OCI-LY7 (cell line): ENCODE measurements at regions of chr15 and their contacts with region 1.

Region 1: DNA sequence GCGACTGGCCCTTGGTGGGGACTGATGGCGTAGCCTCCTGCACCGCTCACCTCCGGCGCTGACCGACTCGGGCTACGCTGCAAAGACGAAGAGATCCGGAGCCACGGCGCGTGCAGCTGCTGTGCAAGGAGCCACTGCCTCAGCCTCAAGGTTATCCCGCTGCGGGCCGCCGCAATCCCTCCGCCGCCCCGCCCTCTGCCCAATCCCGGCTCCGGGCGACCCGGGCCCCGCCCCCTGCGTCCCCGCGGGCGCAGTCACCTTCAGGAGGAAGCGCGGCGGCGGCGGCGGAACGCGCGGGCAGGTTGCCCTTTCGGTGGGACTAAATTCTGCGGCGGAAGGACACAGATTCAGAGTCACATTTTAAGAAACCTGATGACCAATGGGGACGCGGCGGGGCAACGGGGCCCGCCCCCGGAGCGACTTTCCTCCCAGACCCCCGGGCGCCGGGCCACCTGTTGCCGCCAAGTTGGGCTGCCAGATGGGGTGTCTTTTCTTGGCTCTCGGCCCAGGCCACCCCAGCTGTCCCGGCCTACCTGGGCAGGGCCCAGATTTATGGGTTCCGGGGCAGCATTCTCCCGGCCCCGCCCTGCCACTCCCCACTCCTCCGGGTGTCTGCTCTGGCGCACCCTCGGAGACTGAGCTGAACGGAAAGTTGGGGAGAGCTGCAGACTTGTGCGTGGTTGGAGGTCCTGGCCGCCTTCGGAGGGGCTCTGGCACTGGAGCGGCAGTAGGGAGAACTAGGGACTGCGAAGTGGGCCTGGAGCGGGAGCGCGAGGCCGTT is at the start of gene PKM:
- DNase-seq: peak; percentile 100
- H3K4me3 ChIP-seq: peak within 1 kb of the TSS; percentile 89
- H3K27ac ChIP-seq: peak within 1 kb of the TSS; percentile 86
- H3K4me1 ChIP-seq: peaks cover 32% of the 10 kb centered on the region
- CTCF ChIP-seq: no peak
- total RNA-seq, gene PKM: 861 and 917 TPM in 2 replicates

Region 2: GRCh38 chr15:71916834-71917233 is 314.4 kb before region 1 on chr15:
- CTCF ChIA-PET with region 1: no interaction called
- POLR2A ChIA-PET with region 1: no interaction called
- intact Hi-C with region 1: no loop called
- DNase-seq: no peak
- H3K4me3 ChIP-seq: no peak overlapping the region
- H3K27ac ChIP-seq: no peak overlapping the region
- H3K4me1 ChIP-seq: no peaks in the 10 kb centered on the region
- CTCF ChIP-seq: no peak

Region 3: DNA sequence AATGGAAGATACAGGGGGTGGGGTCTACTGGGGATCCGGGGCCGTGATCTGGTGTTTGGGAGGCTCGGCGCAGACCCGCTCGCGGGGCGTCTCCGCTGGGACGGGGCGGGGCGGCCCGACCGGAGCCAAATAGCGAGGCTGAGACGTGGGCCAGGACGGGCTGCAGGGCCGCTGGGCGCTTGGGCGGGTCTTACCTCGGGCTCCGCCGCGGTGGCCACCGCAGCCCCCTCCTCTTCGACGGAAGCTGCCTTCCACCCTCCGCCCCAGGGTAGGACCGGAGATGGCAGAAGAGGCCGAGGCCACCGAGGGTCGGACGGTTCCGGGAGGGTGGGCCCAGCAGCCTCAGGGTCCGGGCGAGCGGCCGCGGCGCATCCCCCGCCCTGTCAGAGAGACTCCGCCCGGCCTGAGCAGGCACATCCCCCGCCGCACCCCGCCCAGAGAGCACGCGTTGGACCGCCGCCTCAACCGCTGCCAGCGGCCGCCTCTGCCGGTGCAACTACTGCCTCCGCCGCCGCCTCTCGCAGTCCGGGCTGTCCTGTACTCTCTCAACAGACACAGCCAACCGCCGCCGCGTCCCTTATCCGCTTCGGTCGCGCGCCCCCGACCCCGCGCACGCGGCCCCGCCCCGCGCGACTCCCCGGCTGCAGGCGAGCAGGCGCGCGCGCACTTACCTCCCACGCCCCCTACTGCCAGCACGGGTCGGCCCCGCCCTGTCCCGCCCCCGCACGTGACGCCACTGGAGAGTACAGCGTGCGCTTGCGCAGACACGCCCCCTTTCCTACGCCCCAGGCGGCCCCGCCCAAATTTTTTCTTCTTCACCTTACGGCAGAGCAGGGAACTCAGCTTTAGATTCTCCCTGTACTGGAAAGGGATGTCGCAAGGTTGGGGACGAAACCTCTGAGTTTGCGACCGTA is 113.5 kb before region 1 on chr15 and contains the start of gene MYO9A:
- CTCF ChIA-PET with region 1: no interaction called
- POLR2A ChIA-PET with region 1: no interaction called
- intact Hi-C with region 1: loop called (anchors 5 kb)
- DNase-seq: peak; percentile 99
- H3K4me3 ChIP-seq: peak within 1 kb of the TSS; percentile 79
- H3K27ac ChIP-seq: peak within 1 kb of the TSS; percentile 71
- H3K4me1 ChIP-seq: peaks cover 20% of the 10 kb centered on the region
- CTCF ChIP-seq: peak; percentile 33
- total RNA-seq, gene MYO9A: 26.2 and 26.4 TPM in 2 replicates

Region 4: DNA sequence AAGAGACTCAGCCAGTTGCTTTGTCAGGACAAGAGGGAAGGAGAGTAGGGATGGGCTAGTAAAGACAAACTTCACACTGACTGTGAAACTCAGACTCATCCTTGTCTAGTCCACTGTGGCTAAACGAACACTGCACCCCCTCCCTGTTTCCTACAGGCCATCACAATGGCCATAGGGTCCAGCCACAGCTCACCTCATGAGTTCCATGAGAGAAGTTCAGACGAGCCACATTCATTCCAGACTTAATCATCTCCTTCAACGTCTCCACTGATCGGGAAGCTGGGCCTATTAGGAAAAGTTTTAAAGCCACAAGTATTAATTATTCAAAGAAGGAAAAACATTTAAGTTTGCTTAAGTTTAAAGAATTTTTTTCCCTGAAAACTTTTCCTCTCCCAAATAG is 14.0 kb before region 1 on chr15:
- CTCF ChIA-PET with region 1: no interaction called
- POLR2A ChIA-PET with region 1: interaction called, 11 read pairs
- intact Hi-C with region 1: no loop called
- DNase-seq: no peak
- H3K4me3 ChIP-seq: no peak overlapping the region
- H3K27ac ChIP-seq: no peak overlapping the region
- H3K4me1 ChIP-seq: peaks cover 5% of the 10 kb centered on the region
- CTCF ChIP-seq: no peak

Region 5: GRCh38 chr15:72285927-72286516 is 54.8 kb after region 1 on chr15:
- CTCF ChIA-PET with region 1: no interaction called
- POLR2A ChIA-PET with region 1: no interaction called
- intact Hi-C with region 1: no loop called
- DNase-seq: peak; percentile 57
- H3K4me3 ChIP-seq: no peak overlapping the region
- H3K27ac ChIP-seq: no peak overlapping the region
- H3K4me1 ChIP-seq: no peaks in the 10 kb centered on the region
- CTCF ChIP-seq: peak; percentile 83

Region 6: DNA sequence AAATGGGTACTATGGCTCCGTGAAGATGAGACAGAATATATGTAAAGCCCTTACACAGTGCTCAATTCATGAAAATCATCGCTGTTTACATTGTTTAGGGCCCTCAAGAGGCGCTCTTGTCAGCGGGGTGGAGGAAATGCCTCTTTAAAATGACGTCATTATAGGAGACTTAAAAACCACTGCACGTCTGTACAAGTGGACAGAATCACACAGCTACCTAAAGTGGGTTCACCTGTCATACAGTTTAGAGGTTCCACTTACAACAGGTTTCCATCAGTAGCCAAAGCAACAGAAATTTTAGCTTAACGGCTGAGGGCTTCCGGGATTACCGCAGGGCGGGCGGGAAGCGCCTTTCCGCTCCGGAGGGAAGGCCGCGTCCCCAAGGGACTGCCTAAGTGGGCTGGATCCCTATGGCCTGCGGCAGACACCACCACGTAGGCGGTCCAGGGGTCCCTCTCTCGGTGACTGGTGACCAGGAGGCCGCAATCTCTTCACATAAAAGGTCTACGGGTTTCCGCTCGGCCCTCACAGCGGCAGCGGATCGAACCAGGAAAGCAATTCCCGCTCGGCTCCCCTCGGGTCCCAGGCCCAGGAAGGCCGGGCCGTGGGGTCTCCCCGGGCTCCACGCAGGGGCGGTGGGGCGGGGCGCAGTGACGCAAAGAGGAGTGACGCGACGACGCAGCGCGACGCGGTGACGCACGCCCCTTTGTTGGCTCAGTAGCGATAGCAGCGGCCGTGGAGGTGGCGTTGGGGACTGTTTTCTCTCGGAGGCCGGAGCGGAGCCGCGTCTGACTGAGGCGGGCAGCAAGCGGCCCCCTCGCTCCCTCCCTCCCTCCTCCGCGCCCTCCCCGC is 242.6 kb after region 1 on chr15 and contains the start of gene ARIH1:
- CTCF ChIA-PET with region 1: no interaction called
- POLR2A ChIA-PET with region 1: no interaction called
- intact Hi-C with region 1: loop called (anchors 2 kb)
- DNase-seq: peak; percentile 95
- H3K4me3 ChIP-seq: peak within 1 kb of the TSS; percentile 94
- H3K27ac ChIP-seq: peak within 1 kb of the TSS; percentile 85
- H3K4me1 ChIP-seq: peaks cover 30% of the 10 kb centered on the region
- CTCF ChIP-seq: peak; percentile 70
- total RNA-seq, gene ARIH1: 33.0 and 37.1 TPM in 2 replicates